ENCODE measurements at regions of chr7 and their contacts with region 1.

Region 1: DNA sequence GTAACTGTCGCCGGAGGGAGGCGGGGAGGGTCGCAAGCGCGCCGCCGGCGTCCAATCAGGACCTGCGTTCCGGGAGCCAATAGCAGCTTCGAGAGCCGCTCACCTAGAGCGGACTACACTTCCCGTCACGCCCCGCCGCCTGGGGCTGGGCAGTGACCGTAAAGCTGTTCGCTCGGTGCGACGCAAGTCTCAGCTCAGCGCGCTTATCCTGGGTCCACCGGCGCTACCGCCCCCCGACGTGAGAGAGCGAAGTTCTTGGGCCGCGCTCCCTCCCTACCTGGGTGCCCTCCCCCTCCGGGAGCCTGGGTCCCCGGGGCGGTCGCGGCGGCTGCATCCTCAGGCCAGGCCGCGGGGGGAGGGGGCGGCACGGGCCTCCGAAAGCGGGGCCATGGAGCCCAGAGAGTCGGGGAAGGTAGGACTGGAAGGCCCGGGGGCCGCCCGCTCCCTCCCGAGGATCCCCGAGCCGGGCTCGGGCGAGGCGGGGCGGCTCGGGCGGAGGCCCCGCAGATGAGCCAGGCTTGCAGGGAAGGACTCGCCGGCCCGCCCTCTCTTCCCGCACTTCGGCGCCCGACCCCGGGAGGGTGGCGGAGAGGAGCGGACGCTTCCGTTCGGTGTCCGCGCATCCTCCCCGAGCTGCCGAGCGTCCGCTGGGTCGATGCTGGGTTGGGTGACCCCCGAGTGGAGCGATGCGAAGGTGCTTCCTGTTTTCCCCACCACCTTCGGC is at the start of gene ZNF862:
- DNase-seq: peak; percentile 90 to 99 (median 95)
- ATAC-seq: peak; percentile 97
- H3K4me3 ChIP-seq: peak within 1 kb of the TSS; percentile 86
- H3K4me3 Mint-ChIP-seq: peak within 1 kb of the TSS; percentile 98
- H3K27ac ChIP-seq: peak within 1 kb of the TSS; percentile 1 to 72
- H3K27ac Mint-ChIP-seq: peak within 1 kb of the TSS; percentile 84
- H3K4me1 ChIP-seq: peaks cover 17% of the 10 kb centered on the region
- H3K4me1 Mint-ChIP-seq: peaks cover 44% of the 10 kb centered on the region
- H3K27me3 ChIP-seq: no peaks in the 10 kb centered on the region
- H3K27me3 Mint-ChIP-seq: no peaks in the 10 kb centered on the region
- CTCF ChIP-seq: no peak
- total RNA-seq, gene ZNF862: 25.6 to 26.6 TPM

Region 2: GRCh38 chr7:149771721-149772240 is 66.6 kb before region 1 on chr7:
- CTCF ChIA-PET with region 1: no interaction called
- POLR2A ChIA-PET with region 1: interaction called, 3 read pairs
- intact Hi-C with region 1: loop called in 1 of 2 experiments (anchors 2 kb)
- DNase-seq: peak; percentile 73 to 93 (median 86)
- ATAC-seq: peak; percentile 87
- H3K4me3 ChIP-seq: peak overlapping the region; percentile 67
- H3K4me3 Mint-ChIP-seq: peak overlapping the region; percentile 84
- H3K27ac ChIP-seq: no peak overlapping the region
- H3K27ac Mint-ChIP-seq: no peak overlapping the region
- H3K4me1 ChIP-seq: peaks cover 31% of the 10 kb centered on the region
- H3K4me1 Mint-ChIP-seq: peaks cover 20% of the 10 kb centered on the region
- H3K27me3 ChIP-seq: no peaks in the 10 kb centered on the region
- H3K27me3 Mint-ChIP-seq: no peaks in the 10 kb centered on the region
- CTCF ChIP-seq: no peak

Region 3: DNA sequence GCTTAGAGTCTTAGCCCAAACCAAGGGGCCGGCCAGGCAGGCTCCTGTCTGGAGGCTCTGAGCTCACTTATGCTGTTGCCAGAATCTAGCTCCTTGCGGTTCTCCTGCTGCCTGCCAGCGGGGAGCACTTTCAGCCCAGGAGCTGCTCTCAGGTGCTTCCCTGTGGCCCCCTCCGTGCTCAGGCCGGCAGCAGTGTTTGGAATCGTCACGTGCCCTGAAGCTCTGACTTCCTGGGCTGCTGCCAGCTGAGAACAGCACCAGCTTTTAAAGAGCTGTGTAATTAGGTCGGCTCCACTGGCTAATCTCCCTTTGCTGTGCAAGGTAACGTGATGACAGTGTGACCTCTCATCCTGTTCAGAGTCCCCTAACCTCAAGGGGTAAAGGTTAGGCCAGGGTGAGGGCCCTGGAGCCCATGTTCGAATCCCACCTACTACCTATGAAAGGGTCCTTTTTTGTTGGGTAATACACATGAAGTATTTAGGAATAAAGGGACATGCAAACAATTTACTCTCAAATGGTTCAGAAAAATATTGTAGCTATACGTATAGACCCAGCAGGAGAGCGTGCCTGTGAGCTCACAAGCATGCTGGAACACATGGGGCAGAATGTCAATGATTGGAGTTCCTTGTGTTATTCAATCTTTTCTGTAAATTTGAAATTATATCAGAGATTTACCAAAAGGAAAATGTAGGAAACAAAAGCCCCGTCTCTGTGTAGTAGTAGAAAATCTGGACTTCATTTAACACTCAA is 16.4 kb after region 1 on chr7:
- CTCF ChIA-PET with region 1: interaction called, 3 read pairs
- POLR2A ChIA-PET with region 1: interaction called, 15 read pairs
- intact Hi-C with region 1: loop called (anchors 2 kb)
- DNase-seq: peak in 13 of 14 experiments; percentile 21 to 68 (median 48)
- ATAC-seq: peak; percentile 80
- H3K4me3 ChIP-seq: no peak overlapping the region
- H3K4me3 Mint-ChIP-seq: peak overlapping the region; percentile 8
- H3K27ac ChIP-seq: no peak overlapping the region
- H3K27ac Mint-ChIP-seq: peak overlapping the region; percentile 61
- H3K4me1 ChIP-seq: peaks cover 44% of the 10 kb centered on the region
- H3K4me1 Mint-ChIP-seq: peaks cover 62% of the 10 kb centered on the region
- H3K27me3 ChIP-seq: no peaks in the 10 kb centered on the region
- H3K27me3 Mint-ChIP-seq: no peaks in the 10 kb centered on the region
- CTCF ChIP-seq: no peak

Region 4: DNA sequence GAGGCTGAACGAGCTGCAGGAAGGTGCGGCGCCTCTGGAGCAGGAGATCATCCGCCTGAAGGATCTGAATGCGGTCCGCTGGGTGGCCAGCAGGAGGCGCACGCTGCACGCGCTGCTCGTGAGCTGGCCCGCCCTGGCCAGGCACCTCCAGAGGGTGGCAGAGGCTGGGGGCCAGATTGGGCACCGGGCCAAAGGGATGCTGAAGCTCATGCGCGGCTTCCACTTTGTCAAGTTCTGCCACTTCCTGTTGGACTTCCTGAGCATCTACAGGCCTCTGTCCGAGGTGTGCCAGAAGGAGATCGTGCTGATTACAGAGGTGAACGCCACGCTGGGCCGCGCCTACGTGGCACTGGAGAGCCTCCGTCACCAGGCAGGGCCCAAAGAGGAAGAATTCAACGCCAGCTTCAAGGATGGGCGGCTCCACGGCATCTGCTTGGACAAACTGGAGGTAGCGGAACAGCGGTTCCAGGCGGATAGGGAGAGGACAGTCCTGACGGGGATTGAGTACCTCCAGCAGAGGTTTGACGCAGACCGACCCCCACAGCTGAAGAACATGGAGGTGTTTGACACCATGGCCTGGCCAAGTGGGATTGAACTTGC is 23.2 kb after region 1 on chr7:
- CTCF ChIA-PET with region 1: interaction called, 3 read pairs
- POLR2A ChIA-PET with region 1: interaction called, 30 read pairs
- intact Hi-C with region 1: loop called (anchors 2 kb)
- DNase-seq: peak in 2 of 14 experiments; percentile 35 to 47
- ATAC-seq: no peak
- H3K4me3 ChIP-seq: no peak overlapping the region
- H3K4me3 Mint-ChIP-seq: no peak overlapping the region
- H3K27ac ChIP-seq: no peak overlapping the region
- H3K27ac Mint-ChIP-seq: no peak overlapping the region
- H3K4me1 ChIP-seq: peaks cover 72% of the 10 kb centered on the region
- H3K4me1 Mint-ChIP-seq: peaks cover 67% of the 10 kb centered on the region
- H3K27me3 ChIP-seq: no peaks in the 10 kb centered on the region
- H3K27me3 Mint-ChIP-seq: no peaks in the 10 kb centered on the region
- CTCF ChIP-seq: peak; percentile 33

Region 5: GRCh38 chr7:151080522-151081169 is 1242.3 kb after region 1 on chr7 and contains the start of gene FASTK:
- CTCF ChIA-PET with region 1: no interaction called
- POLR2A ChIA-PET with region 1: no interaction called
- intact Hi-C with region 1: loop called in 1 of 2 experiments (anchors 10 kb)
- DNase-seq: peak; percentile 73 to 95 (median 85)
- ATAC-seq: peak; percentile 63
- H3K4me3 ChIP-seq: peak within 1 kb of the TSS; percentile 98
- H3K4me3 Mint-ChIP-seq: peak within 1 kb of the TSS; percentile 92
- H3K27ac ChIP-seq: peak within 1 kb of the TSS; percentile 77 to 92
- H3K27ac Mint-ChIP-seq: peak within 1 kb of the TSS; percentile 85
- H3K4me1 ChIP-seq: peaks cover 52% of the 10 kb centered on the region
- H3K4me1 Mint-ChIP-seq: peaks cover 45% of the 10 kb centered on the region
- H3K27me3 ChIP-seq: no peaks in the 10 kb centered on the region
- H3K27me3 Mint-ChIP-seq: peaks cover 4% of the 10 kb centered on the region
- CTCF ChIP-seq: no peak
- total RNA-seq, gene FASTK: 82.2 to 84.2 TPM